ENCODE measurements at regions of chr17 and their contacts with region 1.

Region 1: GRCh38 chr17:75059369-75060345 is 12.6 kb downstream of the KCTD2 start:
- DNase-seq: peak in 2 of 5 donors; percentile 50 to 53
- ATAC-seq: peak; percentile 62 to 87 (median 78)
- H3K4me3 ChIP-seq: no peak overlapping the region
- H3K27ac ChIP-seq: peak overlapping the region; percentile 6 to 87 (median 59)
- H3K4me1 ChIP-seq: peaks cover 0 to 21% (median 10%) of the 10 kb centered on the region in 12 donors
- H3K27me3 ChIP-seq: no peaks in the 10 kb centered on the region
- CTCF ChIP-seq: peak in 11 of 12 donors; percentile 26 to 68 (median 41)
- POLR2A ChIP-seq: no peak

Region 2: GRCh38 chr17:75102385-75102821 is 42.7 kb after region 1 on chr17:
- intact Hi-C with region 1: loop called in 2 of 10 experiments (anchors 5 kb)
- DNase-seq: no peak
- ATAC-seq: no peak
- H3K4me3 ChIP-seq: no peak overlapping the region
- H3K27ac ChIP-seq: no peak overlapping the region
- H3K4me1 ChIP-seq: peaks cover 0 to 10% (median 2%) of the 10 kb centered on the region in 12 donors
- H3K27me3 ChIP-seq: no peaks in the 10 kb centered on the region
- CTCF ChIP-seq: no peak
- POLR2A ChIP-seq: no peak

Region 3: GRCh38 chr17:75199886-75200618 is 140.4 kb after region 1 on chr17:
- intact Hi-C with region 1: loop called in 5 of 10 experiments (anchors 5 to 10 kb)
- DNase-seq: no peak
- ATAC-seq: no peak
- H3K4me3 ChIP-seq: no peak overlapping the region
- H3K27ac ChIP-seq: no peak overlapping the region
- H3K4me1 ChIP-seq: peaks cover 0 to 11% (median 6%) of the 10 kb centered on the region in 12 donors
- H3K27me3 ChIP-seq: no peaks in the 10 kb centered on the region
- CTCF ChIP-seq: no peak
- POLR2A ChIP-seq: no peak

Region 4: GRCh38 chr17:75205037-75205792 is 145.6 kb after region 1 on chr17 and contains the start of gene NUP85:
- intact Hi-C with region 1: loop called in 5 of 10 experiments (anchors 5 to 10 kb)
- DNase-seq: peak; percentile 95 to 97 (median 96)
- ATAC-seq: peak; percentile 94 to 98 (median 98)
- H3K4me3 ChIP-seq: peak within 1 kb of the TSS; percentile 63 to 99 (median 88)
- H3K27ac ChIP-seq: peak within 1 kb of the TSS; percentile 83 to 99 (median 96)
- H3K4me1 ChIP-seq: peaks cover 0 to 29% (median 19%) of the 10 kb centered on the region in 12 donors
- H3K27me3 ChIP-seq: no peaks in the 10 kb centered on the region
- CTCF ChIP-seq: no peak
- POLR2A ChIP-seq: peak in 1 of 2 donors; percentile 67
- total RNA-seq, gene NUP85: 9.4 to 40.9 (median 21.5) TPM